K562 (cell line): ENCODE measurements at regions of chr1 and their contacts with region 1.

Region 1: DNA sequence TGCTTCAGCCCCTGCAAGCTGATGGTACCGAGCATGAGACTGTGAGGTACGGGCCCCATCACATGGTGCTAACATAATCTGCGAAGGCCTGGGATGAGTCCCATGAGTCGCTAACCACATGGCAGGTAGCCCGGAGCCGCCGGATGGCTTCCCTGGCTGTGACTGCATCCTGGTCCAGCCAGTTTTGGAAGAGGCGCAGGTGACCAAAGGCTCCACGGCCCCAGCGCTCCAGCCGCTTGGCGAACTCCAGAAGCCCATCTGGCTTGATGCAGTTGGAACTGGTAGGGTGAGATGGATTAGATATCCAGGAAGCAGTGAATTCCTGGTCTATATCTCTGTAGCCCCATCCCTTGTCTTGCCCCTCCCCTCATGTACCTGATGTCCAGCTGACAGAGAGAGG is 24.6 kb downstream of the LRRC41 start:
- DNase-seq: no peak
- ATAC-seq: peak; percentile 4
- H3K4me3 ChIP-seq: no peak overlapping the region
- H3K27ac ChIP-seq: no peak overlapping the region
- H3K4me1 ChIP-seq: peaks cover 9 to 13% of the 10 kb centered on the region in 2 experiments; a peak in 4 of 5 replicates
- H3K27me3 ChIP-seq: no peaks in the 10 kb centered on the region
- CTCF ChIP-seq: no peak
- EP300 ChIP-seq: no peak
- POLR2A ChIP-seq: peak; percentile 72
- RAD21 ChIP-seq: no peak

Region 2: GRCh38 chr1:46003315-46003714 is 275.5 kb before region 1 on chr1:
- CTCF ChIA-PET with region 1: no interaction called
- POLR2A ChIA-PET with region 1: no interaction called
- in situ Hi-C with region 1: no loop called
- intact Hi-C with region 1: no loop called
- DNase-seq: no peak
- ATAC-seq: no peak
- H3K4me3 ChIP-seq: no peak overlapping the region
- H3K27ac ChIP-seq: no peak overlapping the region
- H3K4me1 ChIP-seq: peaks cover 0 to 8% of the 10 kb centered on the region in 2 experiments; a peak in 2 of 5 replicates
- H3K27me3 ChIP-seq: no peaks in the 10 kb centered on the region
- CTCF ChIP-seq: no peak
- EP300 ChIP-seq: no peak
- POLR2A ChIP-seq: no peak
- RAD21 ChIP-seq: no peak

Region 3: GRCh38 chr1:46262508-46262907 is 16.3 kb before region 1 on chr1:
- CTCF ChIA-PET with region 1: no interaction called
- POLR2A ChIA-PET with region 1: interaction called, 103 read pairs
- in situ Hi-C with region 1: no loop called
- intact Hi-C with region 1: no loop called
- DNase-seq: no peak
- ATAC-seq: no peak
- H3K4me3 ChIP-seq: no peak overlapping the region
- H3K27ac ChIP-seq: no peak overlapping the region
- H3K4me1 ChIP-seq: no peaks in the 10 kb centered on the region
- H3K27me3 ChIP-seq: no peaks in the 10 kb centered on the region
- CTCF ChIP-seq: no peak
- EP300 ChIP-seq: no peak
- POLR2A ChIP-seq: no peak
- RAD21 ChIP-seq: no peak